Aorta (tissue), 5 donors: ENCODE measurements at regions of chr7 and their contacts with region 1.

Region 1: DNA sequence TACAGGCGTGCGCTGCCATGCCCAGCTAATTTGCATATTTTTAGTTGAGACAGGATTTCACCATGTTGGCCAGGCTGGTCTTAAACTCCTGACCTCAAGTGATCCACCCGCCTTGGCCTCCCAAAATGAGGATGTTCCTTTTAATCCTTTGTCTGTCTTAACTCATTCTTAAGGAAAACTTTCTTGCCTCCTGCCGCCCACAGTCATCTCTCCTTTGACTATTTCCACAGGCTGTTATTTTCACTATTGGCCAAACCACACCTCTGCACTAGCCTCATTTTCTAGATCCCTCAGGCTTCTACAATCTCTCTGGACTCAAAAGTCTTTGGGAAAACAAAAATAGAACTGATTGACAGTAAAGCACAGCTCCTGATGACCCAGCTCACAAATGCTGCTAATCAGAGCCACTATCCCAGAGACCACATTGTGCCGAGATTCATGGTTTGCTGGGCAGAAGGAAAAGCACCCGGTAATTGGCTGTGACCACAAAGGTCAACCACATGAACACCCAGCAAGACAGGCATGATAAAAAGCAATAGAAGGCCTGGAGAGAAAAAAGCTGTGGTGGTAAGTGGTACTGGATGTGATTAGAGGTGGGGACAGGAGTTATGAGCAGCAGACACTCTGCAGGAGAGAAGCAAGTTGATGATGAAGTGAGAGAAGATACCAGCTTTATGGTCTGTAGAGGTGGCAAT is 44.1 kb upstream of the ZNRF2 start:
- DNase-seq: no peak
- ATAC-seq: no peak
- H3K4me3 ChIP-seq: no peak overlapping the region
- H3K27ac ChIP-seq: no peak overlapping the region
- H3K4me1 ChIP-seq: peaks cover 0 to 4% of the 10 kb centered on the region in 2 donors
- H3K27me3 ChIP-seq: no peaks in the 10 kb centered on the region

Region 2: DNA sequence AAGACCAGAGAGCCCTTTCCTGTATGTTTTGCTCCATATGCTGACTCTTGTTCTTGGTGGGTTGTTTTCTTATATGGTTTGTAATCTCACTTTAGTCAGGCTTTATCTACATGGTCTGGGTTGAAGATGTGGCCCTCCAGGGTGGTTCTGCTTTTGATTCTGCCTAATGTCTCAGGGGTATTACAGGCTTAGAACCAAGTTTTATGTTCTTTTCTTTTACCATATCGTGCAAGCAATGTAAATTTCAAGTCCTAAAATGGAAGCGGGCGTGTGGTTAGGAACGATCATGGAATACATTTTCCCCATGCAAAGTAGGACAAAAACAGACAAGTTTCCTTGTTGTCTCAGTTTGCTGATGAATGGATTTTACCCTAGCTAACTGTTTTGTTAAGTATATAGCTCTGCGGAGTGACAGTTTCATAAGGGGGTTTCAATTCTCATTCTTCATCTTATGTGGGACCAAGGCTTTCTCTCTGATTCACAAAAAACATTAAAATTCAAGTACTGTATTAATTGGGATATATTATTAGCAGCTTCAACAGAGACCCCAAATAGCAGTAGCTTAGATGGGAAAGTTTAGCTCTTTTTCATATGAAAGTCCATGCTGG is 46.8 kb before region 1 on chr7:
- intact Hi-C with region 1: loop called in 1 of 2 experiments (anchors 10 kb)
- DNase-seq: no peak
- ATAC-seq: no peak
- H3K4me3 ChIP-seq: no peak overlapping the region
- H3K27ac ChIP-seq: no peak overlapping the region
- H3K4me1 ChIP-seq: no peaks in the 10 kb centered on the region
- H3K27me3 ChIP-seq: no peaks in the 10 kb centered on the region